Activated naive CD4-positive, alpha-beta T cell treated with anti-CD3 and anti-CD28 coated beads, Interleukin-2, amount 10 ng/mL, durations not matched to agents 7 days and 5 days (primary cell): ENCODE measurements at regions of chr4 and their contacts with region 1.

Region 1: GRCh38 chr4:80202190-80202711 is 4.9 kb downstream of the PRDM8 start:
- DNase-seq: peak; percentile 83
- H3K4me3 Mint-ChIP-seq: peak overlapping the region; percentile 77
- H3K27ac Mint-ChIP-seq: peak overlapping the region; percentile 70
- H3K4me1 Mint-ChIP-seq: peaks cover 28% of the 10 kb centered on the region
- H3K27me3 Mint-ChIP-seq: peaks cover 50% of the 10 kb centered on the region

Region 2: DNA sequence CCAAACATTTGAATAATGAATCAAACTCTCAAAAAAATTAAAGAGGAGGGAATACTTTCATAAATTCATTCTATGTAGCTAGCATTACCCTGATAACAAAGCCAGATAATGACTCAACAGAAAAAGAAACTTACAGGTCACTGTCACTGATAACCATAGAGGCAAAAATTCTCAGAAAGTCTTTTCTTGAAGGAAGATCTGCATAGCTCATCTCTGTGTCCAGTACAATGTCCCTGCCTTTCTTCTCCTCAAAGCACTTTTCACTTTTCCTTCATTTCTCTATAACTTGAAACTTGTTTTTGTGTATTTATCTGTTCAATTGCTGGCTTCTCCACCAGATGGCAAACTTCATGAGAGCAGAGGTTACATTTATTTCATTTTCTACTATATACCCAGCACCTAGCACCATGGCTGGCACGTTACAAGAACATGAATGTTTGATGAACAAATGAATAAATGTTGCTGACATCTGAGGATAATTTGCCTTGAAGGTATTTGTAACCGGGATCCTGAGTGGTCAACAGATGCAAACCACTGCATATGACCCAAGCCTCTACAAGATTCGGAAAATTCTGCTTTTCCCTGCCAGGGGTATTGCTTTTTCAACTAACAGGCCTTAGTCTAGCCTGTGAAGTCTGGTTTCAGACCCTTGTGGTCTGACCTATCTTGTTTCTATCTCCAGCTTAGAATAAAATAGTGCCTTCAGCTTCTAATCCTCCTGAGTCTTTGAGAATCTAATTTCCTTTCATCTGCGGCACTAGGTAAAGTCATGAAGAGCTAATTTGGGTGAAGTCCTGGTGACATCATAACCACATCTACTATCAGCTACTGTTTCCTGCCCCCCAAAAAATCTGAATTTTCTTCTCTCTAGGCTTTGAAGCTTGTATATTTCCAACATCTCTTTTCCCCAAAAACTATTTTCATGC is 76.7 kb before region 1 on chr4:
- CTCF ChIA-PET with region 1: interaction called, 15 read pairs
- DNase-seq: peak; percentile 54
- H3K4me3 Mint-ChIP-seq: peak overlapping the region; percentile 6
- H3K27ac Mint-ChIP-seq: peak overlapping the region; percentile 89
- H3K4me1 Mint-ChIP-seq: peaks cover 58% of the 10 kb centered on the region
- H3K27me3 Mint-ChIP-seq: no peaks in the 10 kb centered on the region

Region 3: GRCh38 chr4:80173401-80173800 is 28.9 kb before region 1 on chr4:
- CTCF ChIA-PET with region 1: interaction called, 10 read pairs
- DNase-seq: peak; percentile 67
- H3K4me3 Mint-ChIP-seq: peak overlapping the region; percentile 57
- H3K27ac Mint-ChIP-seq: peak overlapping the region; percentile 96
- H3K4me1 Mint-ChIP-seq: peaks cover 55% of the 10 kb centered on the region
- H3K27me3 Mint-ChIP-seq: no peaks in the 10 kb centered on the region

Region 4: GRCh38 chr4:80215449-80216052 is 13.3 kb after region 1 on chr4:
- CTCF ChIA-PET with region 1: interaction called, 12 read pairs
- DNase-seq: no peak
- H3K4me3 Mint-ChIP-seq: no peak overlapping the region
- H3K27ac Mint-ChIP-seq: no peak overlapping the region
- H3K4me1 Mint-ChIP-seq: no peaks in the 10 kb centered on the region
- H3K27me3 Mint-ChIP-seq: peaks cover 35% of the 10 kb centered on the region